MCF 10A (cell line): ENCODE measurements at regions of chr15 and their contacts with region 1.

Region 1: GRCh38 chr15:101445562-101446517 is 43.7 kb downstream of the PCSK6 start:
- DNase-seq: peak; percentile 86
- H3K4me3 Mint-ChIP-seq: no peak overlapping the region
- H3K27ac Mint-ChIP-seq: no peak overlapping the region
- H3K4me1 Mint-ChIP-seq: peaks cover 15% of the 10 kb centered on the region
- H3K27me3 Mint-ChIP-seq: no peaks in the 10 kb centered on the region
- CTCF ChIP-seq: no peak

Region 2: GRCh38 chr15:101358895-101359294 is 86.9 kb before region 1 on chr15:
- CTCF ChIA-PET with region 1: no interaction called
- POLR2A ChIA-PET with region 1: no interaction called
- intact Hi-C with region 1: loop called (anchors 5 kb)
- DNase-seq: peak; percentile 94
- H3K4me3 Mint-ChIP-seq: no peak overlapping the region
- H3K27ac Mint-ChIP-seq: peak overlapping the region; percentile 33
- H3K4me1 Mint-ChIP-seq: peaks cover 47% of the 10 kb centered on the region
- H3K27me3 Mint-ChIP-seq: no peaks in the 10 kb centered on the region
- CTCF ChIP-seq: no peak